ENCODE measurements at regions of chr19 and their contacts with region 1.

Region 1: DNA sequence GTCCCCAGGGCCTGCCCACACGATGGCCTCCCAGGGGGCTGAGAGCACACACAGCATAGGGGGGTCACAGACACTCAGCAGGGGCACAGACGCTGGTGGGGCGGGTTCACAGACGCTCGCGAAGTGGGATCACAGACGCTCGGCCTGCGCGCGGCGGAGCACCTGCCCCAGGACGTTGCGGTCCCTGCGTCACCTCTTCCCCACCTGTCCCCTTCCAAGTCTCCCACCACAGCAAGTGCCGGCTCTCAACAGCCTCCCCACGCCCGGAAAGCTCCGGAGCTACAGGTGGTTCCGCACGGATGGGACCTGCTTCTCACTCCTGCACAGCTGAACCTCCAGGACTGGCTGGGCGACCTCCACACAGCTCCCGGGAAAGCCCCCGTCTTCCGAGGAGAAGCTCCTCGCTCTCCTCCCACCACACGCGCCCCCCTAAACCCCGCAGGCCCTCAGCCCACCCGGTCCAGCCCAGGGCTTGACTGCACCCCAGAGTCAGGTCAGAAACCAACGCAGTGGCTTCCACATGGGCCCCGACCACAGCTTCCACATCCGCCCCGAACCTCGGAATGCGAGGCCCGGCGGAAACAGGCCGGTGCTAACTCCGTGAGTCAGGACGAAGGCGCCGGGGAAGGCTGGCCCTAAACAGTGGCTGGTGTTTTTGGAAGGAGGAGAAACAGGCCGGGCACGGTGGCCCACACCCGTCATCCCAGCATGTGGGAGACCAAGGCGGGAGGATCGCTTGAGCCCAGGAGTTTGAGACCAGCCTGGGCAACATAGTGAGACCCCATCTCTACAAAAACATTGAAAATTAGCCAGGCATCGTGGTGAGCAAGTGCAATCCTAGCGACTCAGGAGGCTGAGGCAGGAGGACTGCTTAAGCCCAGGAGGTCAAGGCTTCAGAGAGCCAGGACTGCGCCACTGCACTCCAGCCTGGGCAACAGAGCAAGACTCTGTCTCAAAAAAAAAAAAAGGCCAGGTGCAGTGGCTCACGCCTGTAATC is 16.5 kb downstream of the BTBD2 start:
- DNase-seq: no peak
- H3K4me3 ChIP-seq: no peak overlapping the region
- H3K27ac ChIP-seq: no peak overlapping the region
- H3K4me1 ChIP-seq: no peaks in the 10 kb centered on the region
- H3K27me3 ChIP-seq: no peaks in the 10 kb centered on the region
- CTCF ChIP-seq: no peak
- POLR2A ChIP-seq: no peak

Region 2: GRCh38 chr19:1767464-1767933 is 231.5 kb before region 1 on chr19:
- intact Hi-C with region 1: no loop called
- DNase-seq: no peak
- H3K4me3 ChIP-seq: no peak overlapping the region
- H3K27ac ChIP-seq: no peak overlapping the region
- H3K4me1 ChIP-seq: no peaks in the 10 kb centered on the region
- H3K27me3 ChIP-seq: peaks cover 13 to 96% of the 10 kb centered on the region in 2 donors
- CTCF ChIP-seq: peak; percentile 48 to 89 (median 87)
- POLR2A ChIP-seq: no peak

Region 3: DNA sequence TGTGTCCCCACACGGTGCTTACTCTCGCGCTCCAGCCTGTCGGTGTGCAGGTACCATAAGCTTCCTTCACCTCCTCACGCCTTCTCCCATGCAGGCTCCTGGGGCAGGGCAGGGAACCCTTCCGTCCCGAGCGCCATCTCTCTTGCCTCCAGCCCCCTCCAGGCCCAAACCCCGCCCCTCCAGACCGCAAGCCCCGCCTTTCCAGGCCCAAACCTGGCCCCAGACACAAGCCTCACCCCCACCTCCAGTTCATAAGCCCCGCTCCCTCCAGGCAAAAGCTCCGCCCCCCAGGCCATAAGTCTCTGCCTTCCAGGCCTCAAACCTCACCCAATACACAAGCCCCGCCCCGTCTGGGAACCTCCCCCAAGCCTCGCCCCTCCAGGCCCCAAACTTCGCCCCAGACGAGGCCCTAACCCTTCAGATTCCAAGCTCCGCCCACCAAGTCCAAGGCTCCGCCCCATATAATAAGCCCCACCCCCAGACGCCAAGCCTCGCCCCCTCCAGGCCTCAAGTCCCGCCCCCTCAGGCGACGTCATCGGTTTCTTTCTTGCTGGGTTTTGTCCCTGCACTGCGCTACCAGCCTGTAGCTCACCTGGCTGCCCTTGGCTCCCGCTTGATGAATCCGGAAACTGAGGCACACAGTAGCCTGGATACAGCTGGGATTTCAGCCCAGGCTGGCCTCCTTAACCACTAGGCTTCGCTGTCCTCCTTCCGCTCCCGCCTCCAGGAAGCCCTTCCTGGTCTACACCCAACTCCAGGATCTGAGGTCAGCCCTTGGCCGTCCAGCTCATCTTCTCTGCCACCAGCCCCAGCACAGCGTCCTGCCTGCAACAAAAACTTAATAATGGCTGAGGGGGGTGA is 35.9 kb after region 1 on chr19:
- intact Hi-C with region 1: loop called (anchors 1 kb)
- DNase-seq: no peak
- H3K4me3 ChIP-seq: no peak overlapping the region
- H3K27ac ChIP-seq: no peak overlapping the region
- H3K4me1 ChIP-seq: peaks cover 0 to 16% of the 10 kb centered on the region in 2 donors
- H3K27me3 ChIP-seq: no peaks in the 10 kb centered on the region
- CTCF ChIP-seq: no peak
- POLR2A ChIP-seq: no peak

Region 4: GRCh38 chr19:3084943-3085342 is 1085.9 kb after region 1 on chr19:
- intact Hi-C with region 1: no loop called
- DNase-seq: no peak
- H3K4me3 ChIP-seq: no peak overlapping the region
- H3K27ac ChIP-seq: no peak overlapping the region
- H3K4me1 ChIP-seq: peaks cover 0 to 5% of the 10 kb centered on the region in 2 donors
- H3K27me3 ChIP-seq: no peaks in the 10 kb centered on the region
- CTCF ChIP-seq: no peak
- POLR2A ChIP-seq: no peak

Measured in breast epithelium (tissue), 4 donors.